Mammary epithelial cell (primary cell): ENCODE measurements at regions of chr3 and their contacts with region 1.

Region 1: DNA sequence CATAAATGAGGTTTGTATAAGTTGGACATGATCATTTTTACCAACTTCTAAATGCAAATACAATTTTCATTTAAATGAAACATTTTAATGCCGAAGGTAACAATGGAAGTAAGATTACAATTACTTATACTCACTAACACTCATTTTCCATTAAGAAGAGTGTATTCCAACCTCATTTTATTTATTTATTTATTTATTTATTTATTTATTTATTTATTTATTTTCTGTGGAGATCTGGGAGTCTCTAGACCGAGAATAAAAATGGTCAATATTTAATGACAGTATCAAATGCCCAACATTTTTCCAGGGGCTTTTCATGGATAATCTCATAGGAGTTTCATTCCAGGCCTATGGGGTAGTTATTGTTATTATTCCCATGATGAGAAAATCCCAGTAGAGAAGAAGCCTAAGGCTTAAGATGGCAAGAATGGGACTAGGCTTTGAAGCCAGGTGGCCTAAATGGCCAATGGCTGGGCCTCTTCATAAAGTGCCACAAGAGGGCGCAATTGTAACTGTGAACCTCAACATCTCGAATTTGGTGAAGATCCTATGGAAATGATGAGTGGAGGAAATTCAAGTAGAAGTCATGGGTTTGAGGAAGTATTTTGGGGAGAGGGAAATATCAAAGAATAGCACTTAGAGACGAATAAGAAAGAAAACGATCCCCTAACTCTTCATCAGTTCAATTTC is 21.3 kb downstream of the VGLL3 start:
- DNase-seq: peak; percentile 46
- H3K4me3 ChIP-seq: no peak overlapping the region
- H3K27ac ChIP-seq: no peak overlapping the region
- H3K4me1 ChIP-seq: peaks cover 11% of the 10 kb centered on the region
- H3K27me3 ChIP-seq: no peaks in the 10 kb centered on the region
- CTCF ChIP-seq: peak; percentile 78 to 85

Region 2: DNA sequence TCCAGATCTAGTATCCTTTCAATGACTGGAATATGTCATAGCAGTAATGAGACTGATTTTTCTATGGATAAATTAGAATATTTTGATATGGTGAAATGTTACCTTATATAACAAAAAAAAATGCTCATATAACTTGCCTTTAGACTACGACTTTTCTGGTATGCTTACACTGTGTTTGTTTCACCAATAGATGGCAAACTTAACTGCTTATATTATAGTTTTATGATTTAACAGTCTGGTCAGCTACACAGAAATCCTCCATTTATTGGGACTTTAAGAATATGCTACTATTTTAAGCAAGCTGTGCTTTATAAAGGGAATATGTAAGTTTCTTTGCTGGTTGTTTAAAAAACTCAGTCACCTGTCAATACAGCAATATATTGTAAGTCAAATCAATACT is 184.3 kb before region 1 on chr3:
- CTCF ChIA-PET with region 1: no interaction called
- dilution Hi-C with region 1: no loop called
- in situ Hi-C with region 1: loop called in 1 of 2 experiments (anchors 25 kb)
- intact Hi-C with region 1: loop called (anchors 1 kb)
- DNase-seq: no peak
- H3K4me3 ChIP-seq: no peak overlapping the region
- H3K27ac ChIP-seq: no peak overlapping the region
- H3K4me1 ChIP-seq: peaks cover 6% of the 10 kb centered on the region
- H3K27me3 ChIP-seq: no peaks in the 10 kb centered on the region
- CTCF ChIP-seq: peak; percentile 51 to 55

Region 3: GRCh38 chr3:86937305-86937791 is 32.3 kb before region 1 on chr3:
- CTCF ChIA-PET with region 1: no interaction called
- dilution Hi-C with region 1: loop called (anchors 5 kb)
- in situ Hi-C with region 1: no loop called
- intact Hi-C with region 1: no loop called
- DNase-seq: peak; percentile 83
- H3K4me3 ChIP-seq: no peak overlapping the region
- H3K27ac ChIP-seq: peak overlapping the region; percentile 57
- H3K4me1 ChIP-seq: peaks cover 24% of the 10 kb centered on the region
- H3K27me3 ChIP-seq: no peaks in the 10 kb centered on the region
- CTCF ChIP-seq: no peak

Region 4: DNA sequence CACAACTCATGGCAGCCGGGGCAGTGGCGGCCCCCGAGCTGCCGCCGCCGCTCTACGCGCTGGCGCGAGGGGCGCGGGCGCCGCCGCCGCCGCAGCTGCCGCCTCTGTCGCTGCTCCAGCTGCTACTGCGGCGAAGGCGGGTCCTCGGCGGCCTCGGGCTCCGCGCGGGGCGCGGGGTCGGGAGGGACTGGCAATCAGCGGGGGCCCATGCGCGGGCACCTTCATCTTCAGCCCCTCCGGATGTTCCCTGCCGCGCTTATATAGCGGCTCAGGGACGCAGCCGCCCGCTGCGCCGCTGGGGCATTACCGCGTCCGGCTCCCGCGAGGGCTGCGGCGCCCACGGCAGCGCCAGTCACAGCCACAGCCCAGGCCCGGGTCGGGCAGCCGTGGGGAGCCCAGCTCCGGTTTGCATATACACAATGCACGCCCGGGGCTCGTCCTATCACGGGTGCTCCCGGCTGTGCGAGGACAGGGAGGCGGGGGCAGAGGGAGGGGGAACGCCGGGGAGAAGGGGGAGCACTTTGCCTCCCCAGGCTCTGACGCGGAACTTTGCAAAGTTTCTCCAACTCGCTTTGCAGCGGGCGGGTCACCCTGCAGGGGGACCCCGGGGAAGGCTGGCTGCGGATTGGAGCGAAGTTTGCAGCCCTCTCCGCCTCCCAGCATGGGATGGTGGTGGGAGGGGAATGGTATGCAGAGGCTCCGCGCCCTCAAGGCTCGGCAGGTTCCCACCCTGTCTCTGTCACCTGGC is 21.3 kb after region 1 on chr3 and contains the start of gene VGLL3:
- CTCF ChIA-PET with region 1: no interaction called
- dilution Hi-C with region 1: no loop called
- in situ Hi-C with region 1: no loop called
- intact Hi-C with region 1: loop called (anchors 1 kb)
- DNase-seq: peak; percentile 86
- H3K4me3 ChIP-seq: peak within 1 kb of the TSS; percentile 69 to 87 (median 76)
- H3K27ac ChIP-seq: peak within 1 kb of the TSS; percentile 91
- H3K4me1 ChIP-seq: peaks cover 35% of the 10 kb centered on the region
- H3K27me3 ChIP-seq: no peaks in the 10 kb centered on the region
- CTCF ChIP-seq: peak in 1 of 2 donors; percentile 25
- total RNA-seq, gene VGLL3: 27.9 to 33.2 TPM

Region 5: DNA sequence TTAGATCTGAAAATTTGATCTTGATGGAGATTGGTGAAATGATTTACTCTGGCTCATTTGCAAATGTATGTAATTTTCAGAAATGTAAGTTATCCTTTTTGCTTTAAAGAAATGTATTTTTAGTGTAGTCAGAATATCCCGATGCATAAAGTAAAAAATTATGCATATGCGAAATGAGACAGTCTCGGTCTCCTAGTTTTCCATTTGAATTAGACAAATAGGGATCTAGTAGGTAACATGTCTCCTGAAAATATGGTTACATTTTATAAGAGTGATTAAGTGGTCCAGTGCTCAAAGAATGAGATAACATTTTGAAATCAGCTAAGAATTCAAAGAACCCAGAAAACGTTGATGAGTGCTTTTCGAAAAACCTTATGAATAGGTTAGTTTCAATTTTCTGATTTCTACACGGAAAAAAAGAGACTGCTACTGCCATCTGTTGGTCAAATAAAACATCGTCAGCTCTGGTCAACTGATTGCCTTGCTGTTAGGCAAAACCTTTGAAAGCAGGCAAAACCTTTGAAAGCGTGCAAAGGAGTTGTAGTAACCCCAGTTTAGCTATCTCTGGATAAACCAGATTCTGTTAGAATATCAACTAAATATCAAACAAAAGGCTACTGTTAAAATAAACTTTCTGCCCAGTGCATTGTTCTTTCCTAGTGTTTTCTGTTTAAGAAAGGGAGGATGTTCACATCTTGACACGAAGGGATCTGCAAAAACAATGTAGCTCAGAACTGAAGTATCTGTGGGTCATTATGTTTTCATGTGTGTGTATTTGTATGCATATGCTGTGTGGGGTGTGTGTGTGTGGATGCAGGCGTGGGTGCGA is 198.2 kb after region 1 on chr3:
- CTCF ChIA-PET with region 1: no interaction called
- dilution Hi-C with region 1: no loop called
- in situ Hi-C with region 1: no loop called
- intact Hi-C with region 1: loop called (anchors 2 kb)
- DNase-seq: peak; percentile 39
- H3K4me3 ChIP-seq: peak overlapping the region; percentile 28 to 47 (median 46)
- H3K27ac ChIP-seq: no peak overlapping the region
- H3K4me1 ChIP-seq: no peaks in the 10 kb centered on the region
- H3K27me3 ChIP-seq: no peaks in the 10 kb centered on the region
- CTCF ChIP-seq: peak; percentile 68 to 71

Region 6: DNA sequence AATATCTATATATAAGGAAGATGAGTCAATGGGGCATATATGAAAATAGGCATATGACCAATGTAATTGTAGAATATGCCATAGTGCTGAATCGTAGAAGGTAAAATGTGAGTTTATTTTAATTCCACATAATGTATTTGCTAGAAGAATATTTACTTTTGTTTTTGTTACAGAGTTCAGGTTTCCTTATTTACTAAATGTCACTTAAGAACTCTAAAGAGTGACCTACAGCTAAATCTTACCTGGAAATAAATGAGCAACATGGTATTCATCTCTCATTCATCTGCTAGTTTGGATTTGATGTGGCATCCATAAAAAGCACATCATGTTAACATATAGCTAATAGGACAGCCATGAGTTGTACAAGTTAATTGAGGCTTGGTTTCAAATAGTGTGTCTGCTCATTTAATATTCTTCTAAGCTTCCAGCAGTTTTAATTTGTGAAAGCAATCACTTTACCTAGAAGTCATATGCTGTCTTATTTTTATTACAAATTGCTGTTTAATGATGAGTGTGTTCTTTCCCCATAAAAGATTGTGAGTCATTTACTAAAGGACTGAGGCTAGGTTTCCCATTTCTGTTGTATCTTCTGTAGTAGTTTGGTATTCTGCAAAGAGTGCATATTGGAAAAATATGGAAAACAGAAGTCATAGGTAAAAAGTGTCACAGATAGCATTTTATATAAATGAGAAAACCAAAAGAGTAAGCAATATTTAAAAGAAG is 528.9 kb after region 1 on chr3:
- CTCF ChIA-PET with region 1: no interaction called
- dilution Hi-C with region 1: no loop called
- in situ Hi-C with region 1: no loop called
- intact Hi-C with region 1: no loop called
- DNase-seq: peak; percentile 20
- H3K4me3 ChIP-seq: no peak overlapping the region
- H3K27ac ChIP-seq: no peak overlapping the region
- H3K4me1 ChIP-seq: no peaks in the 10 kb centered on the region
- H3K27me3 ChIP-seq: no peaks in the 10 kb centered on the region
- CTCF ChIP-seq: no peak